MCF 10A (cell line): ENCODE measurements at regions of chr2 and their contacts with region 1.

Region 1: GRCh38 chr2:201231781-201232466 is 28.4 kb upstream of the CASP8 start:
- DNase-seq: peak; percentile 96
- H3K4me3 Mint-ChIP-seq: peak overlapping the region; percentile 94
- H3K27ac Mint-ChIP-seq: peak overlapping the region; percentile 63
- H3K4me1 Mint-ChIP-seq: peaks cover 30% of the 10 kb centered on the region
- H3K27me3 Mint-ChIP-seq: no peaks in the 10 kb centered on the region
- CTCF ChIP-seq: peak; percentile 89

Region 2: GRCh38 chr2:199833525-199833924 is 1398.4 kb before region 1 on chr2:
- CTCF ChIA-PET with region 1: no interaction called
- POLR2A ChIA-PET with region 1: no interaction called
- intact Hi-C with region 1: no loop called
- DNase-seq: no peak
- H3K4me3 Mint-ChIP-seq: no peak overlapping the region
- H3K27ac Mint-ChIP-seq: no peak overlapping the region
- H3K4me1 Mint-ChIP-seq: no peaks in the 10 kb centered on the region
- H3K27me3 Mint-ChIP-seq: peaks cover 8% of the 10 kb centered on the region
- CTCF ChIP-seq: no peak

Region 3: DNA sequence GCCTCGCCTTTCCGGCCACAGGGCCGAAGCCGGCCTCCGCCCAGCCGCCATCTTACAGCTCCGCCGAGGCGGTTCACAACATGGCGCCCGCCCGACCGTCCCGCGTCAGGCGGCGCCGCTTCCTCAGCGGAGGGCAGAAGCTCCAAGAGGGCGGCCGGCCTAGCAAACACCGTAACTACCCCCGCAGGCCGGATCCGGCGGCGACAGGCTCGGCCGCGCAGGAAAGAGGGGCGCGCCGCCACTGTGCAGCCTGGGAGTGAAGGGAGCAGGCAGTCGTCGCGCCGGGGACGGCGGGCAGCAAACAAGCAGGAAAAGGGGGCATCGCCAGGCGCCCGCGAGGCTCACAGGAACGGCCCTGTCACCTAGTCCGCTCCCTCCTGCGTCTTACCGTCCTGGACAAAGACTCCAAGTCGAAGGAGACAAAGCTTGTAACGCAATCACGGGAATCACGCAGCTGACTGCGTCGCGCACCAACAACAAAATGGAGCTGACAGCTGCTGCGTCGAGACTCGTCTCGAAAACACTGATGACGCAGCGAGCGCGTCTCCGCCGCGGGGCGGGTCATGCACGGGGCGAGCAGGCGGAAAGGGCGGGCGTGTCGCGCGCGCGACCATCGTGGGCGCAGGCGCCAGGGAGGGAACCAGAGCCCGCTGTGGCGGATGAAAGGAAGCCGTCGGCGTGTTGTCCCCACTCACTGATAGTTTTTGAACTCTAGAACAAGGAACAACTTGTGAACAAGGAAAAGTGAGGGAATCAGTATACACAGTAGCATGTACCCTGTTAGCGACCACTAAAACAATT is 367.5 kb before region 1 on chr2 and contains the start of gene CLK1:
- CTCF ChIA-PET with region 1: no interaction called
- POLR2A ChIA-PET with region 1: interaction called, 18 read pairs
- intact Hi-C with region 1: no loop called
- DNase-seq: peak; percentile 91
- H3K4me3 Mint-ChIP-seq: peak within 1 kb of the TSS; percentile 86
- H3K27ac Mint-ChIP-seq: peak within 1 kb of the TSS; percentile 99
- H3K4me1 Mint-ChIP-seq: peaks cover 16% of the 10 kb centered on the region
- H3K27me3 Mint-ChIP-seq: no peaks in the 10 kb centered on the region
- CTCF ChIP-seq: no peak
- total RNA-seq, gene CLK1: 102 and 118 TPM in 2 replicates

Region 4: GRCh38 chr2:201071479-201072200 is 160.3 kb before region 1 on chr2 and contains the starts of genes HYCC2 and NDUFB3:
- CTCF ChIA-PET with region 1: interaction called, 30 read pairs
- POLR2A ChIA-PET with region 1: interaction called, 58 read pairs
- intact Hi-C with region 1: loop called (anchors 2 kb)
- DNase-seq: peak; percentile 93
- H3K4me3 Mint-ChIP-seq: peak within 1 kb of the TSS; percentile 81
- H3K27ac Mint-ChIP-seq: peak within 1 kb of the TSS; percentile 89
- H3K4me1 Mint-ChIP-seq: peaks cover 25% of the 10 kb centered on the region
- H3K27me3 Mint-ChIP-seq: no peaks in the 10 kb centered on the region
- CTCF ChIP-seq: no peak
- total RNA-seq, gene HYCC2: 13.7 and 13.9 TPM in 2 replicates
- total RNA-seq, gene NDUFB3: 78.0 and 94.9 TPM in 2 replicates

Region 5: DNA sequence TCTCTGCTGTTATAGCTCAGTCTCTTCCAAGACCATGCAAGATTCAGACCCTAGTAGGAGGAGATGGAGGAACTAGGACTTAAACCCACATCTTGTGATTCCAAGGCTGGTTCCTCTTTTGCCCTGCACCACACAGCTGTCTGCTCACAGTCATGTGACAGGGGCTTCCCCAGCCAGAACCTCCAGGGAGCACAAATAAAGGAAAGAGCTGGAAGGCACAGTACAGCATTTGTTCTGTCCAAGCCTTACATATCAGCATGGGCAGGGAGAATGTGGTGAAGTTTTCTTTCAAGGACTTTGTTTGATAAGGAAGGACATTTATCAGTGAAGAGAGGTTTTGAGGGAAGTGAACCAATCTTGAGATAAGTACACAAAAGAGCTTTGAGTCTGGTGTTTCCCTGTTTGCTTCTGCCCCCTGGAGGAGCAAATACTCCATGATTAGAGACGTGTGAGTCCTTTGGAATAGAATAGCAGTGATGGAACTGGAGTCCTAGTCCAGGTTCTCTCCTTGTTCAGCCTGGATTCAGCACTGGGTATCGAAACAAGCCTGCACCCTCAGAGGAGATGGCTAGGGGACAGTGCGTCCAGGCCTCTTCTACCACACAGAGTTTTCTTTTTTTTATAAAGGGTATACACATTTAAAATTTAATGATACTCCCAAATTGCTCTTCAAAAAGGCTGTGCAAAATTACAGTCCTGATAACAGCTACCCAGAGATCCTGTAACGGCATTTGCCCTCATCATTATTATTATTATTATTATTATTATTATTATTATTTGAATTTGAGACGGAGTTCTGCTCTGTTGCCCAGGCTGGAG is 73.6 kb before region 1 on chr2:
- CTCF ChIA-PET with region 1: interaction called, 27 read pairs
- POLR2A ChIA-PET with region 1: interaction called, 15 read pairs
- intact Hi-C with region 1: no loop called
- DNase-seq: peak; percentile 87
- H3K4me3 Mint-ChIP-seq: no peak overlapping the region
- H3K27ac Mint-ChIP-seq: peak overlapping the region; percentile 69
- H3K4me1 Mint-ChIP-seq: peaks cover 8% of the 10 kb centered on the region
- H3K27me3 Mint-ChIP-seq: no peaks in the 10 kb centered on the region
- CTCF ChIP-seq: peak; percentile 62

Region 6: GRCh38 chr2:201257956-201258665 is 26.2 kb after region 1 on chr2:
- CTCF ChIA-PET with region 1: interaction called, 12 read pairs
- POLR2A ChIA-PET with region 1: interaction called, 28 read pairs
- intact Hi-C with region 1: loop called (anchors 1 kb)
- DNase-seq: peak; percentile 98
- H3K4me3 Mint-ChIP-seq: peak overlapping the region; percentile 95
- H3K27ac Mint-ChIP-seq: peak overlapping the region; percentile 99
- H3K4me1 Mint-ChIP-seq: peaks cover 20% of the 10 kb centered on the region
- H3K27me3 Mint-ChIP-seq: no peaks in the 10 kb centered on the region
- CTCF ChIP-seq: no peak

Region 7: DNA sequence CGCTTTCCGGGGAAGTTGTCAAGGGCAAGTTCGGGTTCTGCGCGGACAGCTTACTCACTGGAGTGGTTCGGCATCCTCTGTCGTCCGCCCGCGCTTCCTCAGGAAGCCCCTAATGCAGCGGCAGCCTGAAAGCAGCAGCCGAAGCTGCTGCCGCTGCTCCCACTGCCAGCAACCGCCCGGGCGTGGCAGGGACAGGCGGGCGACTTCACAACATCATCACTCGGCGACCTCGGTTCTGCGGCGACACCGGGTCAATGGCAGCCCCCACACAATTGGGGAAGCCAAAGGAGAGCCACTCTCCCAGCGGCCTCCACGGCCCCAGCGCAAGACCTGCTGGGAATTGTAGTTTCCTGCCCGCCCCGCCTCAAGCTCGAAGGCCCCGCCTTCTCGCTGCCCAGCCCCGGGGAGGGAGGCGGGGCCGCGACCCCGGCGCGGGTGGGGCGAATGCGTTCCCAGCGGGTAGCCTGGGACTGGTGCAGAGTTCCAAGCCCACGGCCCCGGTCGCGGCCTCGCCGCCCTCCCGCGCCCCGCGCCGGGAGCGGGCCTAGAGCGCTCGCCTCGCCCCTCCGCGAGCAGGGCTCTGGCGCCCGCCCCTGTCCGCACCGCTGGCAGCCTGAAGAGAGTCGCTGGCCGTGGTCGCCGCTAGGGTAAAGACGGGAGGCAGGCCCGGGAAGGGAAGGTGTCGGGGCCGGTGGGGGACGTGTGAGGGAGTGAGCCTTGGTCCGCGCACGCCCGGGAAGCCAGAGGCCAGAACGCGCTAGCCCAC is 219.6 kb after region 1 on chr2 and contains the starts of genes STRADB and TRAK2:
- CTCF ChIA-PET with region 1: interaction called, 4 read pairs
- POLR2A ChIA-PET with region 1: interaction called, 27 read pairs
- intact Hi-C with region 1: loop called (anchors 2 kb)
- DNase-seq: peak; percentile 93
- H3K4me3 Mint-ChIP-seq: peak within 1 kb of the TSS; percentile 96
- H3K27ac Mint-ChIP-seq: peak within 1 kb of the TSS; percentile 92
- H3K4me1 Mint-ChIP-seq: peaks cover 8% of the 10 kb centered on the region
- H3K27me3 Mint-ChIP-seq: no peaks in the 10 kb centered on the region
- CTCF ChIP-seq: peak; percentile 28
- total RNA-seq, gene STRADB: 22.9 and 29.8 TPM in 2 replicates
- total RNA-seq, gene TRAK2: 11.5 and 19.9 TPM in 2 replicates

Region 8: GRCh38 chr2:201780674-201781581 is 549.0 kb after region 1 on chr2 and contains the start of gene ALS2:
- CTCF ChIA-PET with region 1: no interaction called
- POLR2A ChIA-PET with region 1: interaction called, 17 read pairs
- intact Hi-C with region 1: no loop called
- DNase-seq: peak; percentile 98
- H3K4me3 Mint-ChIP-seq: peak within 1 kb of the TSS; percentile 95
- H3K27ac Mint-ChIP-seq: peak within 1 kb of the TSS; percentile 97
- H3K4me1 Mint-ChIP-seq: peaks cover 13% of the 10 kb centered on the region
- H3K27me3 Mint-ChIP-seq: no peaks in the 10 kb centered on the region
- CTCF ChIP-seq: no peak
- total RNA-seq, gene ALS2: 14.6 and 20.7 TPM in 2 replicates